ENCODE measurements at regions of chr22 and their contacts with region 1.

Region 1: GRCh38 chr22:48084041-48084728 is 1321.7 kb downstream of the TBC1D22A start:
- DNase-seq: peak; percentile 73
- H3K4me3 Mint-ChIP-seq: peak overlapping the region; percentile 16
- H3K27ac Mint-ChIP-seq: no peak overlapping the region
- H3K4me1 Mint-ChIP-seq: peaks cover 17% of the 10 kb centered on the region
- H3K27me3 Mint-ChIP-seq: peaks cover 32% of the 10 kb centered on the region

Region 2: DNA sequence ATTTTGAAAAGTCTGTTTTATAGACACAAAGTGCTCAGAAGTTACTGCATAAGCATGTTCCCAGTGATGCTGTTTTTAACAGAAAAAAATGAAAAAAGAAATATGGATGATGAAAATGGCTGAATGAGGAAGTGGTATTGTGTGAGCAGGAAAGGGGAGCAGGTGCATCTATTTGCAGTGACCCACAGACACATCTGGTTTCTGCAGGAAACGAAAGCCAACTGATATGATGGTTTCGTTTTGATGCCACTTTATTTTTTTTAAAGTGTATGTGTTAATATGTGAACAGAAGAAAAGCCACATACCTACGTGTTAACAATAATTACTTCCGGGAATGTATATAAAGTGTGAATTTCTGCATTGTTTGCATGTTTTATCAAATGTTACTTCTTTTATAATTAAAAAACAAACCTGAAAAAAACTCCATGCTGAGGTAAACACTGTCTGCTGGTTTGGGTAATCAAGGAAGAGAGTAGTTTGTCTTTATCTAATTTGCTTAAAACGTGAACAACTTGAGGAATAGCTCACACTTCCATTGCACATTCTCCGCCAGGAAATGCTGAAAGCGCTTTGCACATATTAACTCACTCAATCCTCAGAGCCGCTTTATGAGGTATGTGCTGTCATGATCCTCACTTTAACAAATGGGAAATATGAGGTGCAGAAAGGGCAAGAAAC is 14.2 kb after region 1 on chr22:
- intact Hi-C with region 1: loop called (anchors 2 kb)
- DNase-seq: peak; percentile 82
- H3K4me3 Mint-ChIP-seq: peak overlapping the region; percentile 26
- H3K27ac Mint-ChIP-seq: peak overlapping the region; percentile 23
- H3K4me1 Mint-ChIP-seq: peaks cover 28% of the 10 kb centered on the region
- H3K27me3 Mint-ChIP-seq: peaks cover 15% of the 10 kb centered on the region